Activated naive CD4-positive, alpha-beta T cell treated with anti-CD3 and anti-CD28 coated beads for 36 hours (primary cell): ENCODE measurements at regions of chr6 and their contacts with region 1.

Region 1: DNA sequence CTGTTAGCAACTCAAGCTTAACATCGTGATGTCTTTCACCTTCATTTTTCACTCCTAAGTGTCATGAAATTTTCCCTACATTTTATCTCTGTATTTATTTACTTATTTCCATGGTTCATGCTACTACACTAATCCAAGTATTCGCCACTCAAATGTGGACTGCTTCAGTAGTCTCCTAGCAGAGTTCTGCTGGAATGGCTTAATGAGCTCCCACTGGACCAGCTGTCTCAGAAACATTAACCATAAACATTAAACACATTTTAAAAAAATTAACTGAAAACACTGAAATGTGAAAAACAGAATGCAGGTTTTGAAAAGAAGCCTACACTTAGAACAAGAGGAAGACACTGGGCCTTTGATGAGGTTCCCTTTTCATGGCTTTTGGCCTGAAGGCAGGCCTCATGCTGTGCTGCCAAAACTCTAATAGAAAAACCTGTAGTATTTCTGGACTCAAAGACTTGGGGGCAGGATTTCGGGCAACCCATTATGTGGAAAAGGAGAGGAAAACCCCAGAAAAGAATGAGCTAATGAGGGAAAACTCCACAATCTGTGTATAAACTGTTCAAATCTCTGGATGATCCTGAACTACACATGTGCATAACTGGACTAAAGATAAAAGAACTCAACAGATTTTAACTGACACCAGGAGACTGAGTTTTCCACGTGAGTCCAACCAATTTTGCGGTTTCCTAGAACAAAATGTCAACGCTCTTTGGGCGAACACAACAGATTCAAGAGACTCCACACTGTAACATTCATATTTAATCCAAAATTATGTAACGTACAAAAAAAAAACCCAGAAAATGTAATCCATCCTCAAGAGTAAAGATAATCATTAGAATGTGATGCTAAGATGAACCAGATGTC is 33.0 kb downstream of the SAMD3 start:
- DNase-seq: no peak
- H3K4me3 Mint-ChIP-seq: no peak overlapping the region
- H3K27ac Mint-ChIP-seq: no peak overlapping the region
- H3K4me1 Mint-ChIP-seq: peaks cover 67% of the 10 kb centered on the region
- H3K27me3 Mint-ChIP-seq: no peaks in the 10 kb centered on the region

Region 2: DNA sequence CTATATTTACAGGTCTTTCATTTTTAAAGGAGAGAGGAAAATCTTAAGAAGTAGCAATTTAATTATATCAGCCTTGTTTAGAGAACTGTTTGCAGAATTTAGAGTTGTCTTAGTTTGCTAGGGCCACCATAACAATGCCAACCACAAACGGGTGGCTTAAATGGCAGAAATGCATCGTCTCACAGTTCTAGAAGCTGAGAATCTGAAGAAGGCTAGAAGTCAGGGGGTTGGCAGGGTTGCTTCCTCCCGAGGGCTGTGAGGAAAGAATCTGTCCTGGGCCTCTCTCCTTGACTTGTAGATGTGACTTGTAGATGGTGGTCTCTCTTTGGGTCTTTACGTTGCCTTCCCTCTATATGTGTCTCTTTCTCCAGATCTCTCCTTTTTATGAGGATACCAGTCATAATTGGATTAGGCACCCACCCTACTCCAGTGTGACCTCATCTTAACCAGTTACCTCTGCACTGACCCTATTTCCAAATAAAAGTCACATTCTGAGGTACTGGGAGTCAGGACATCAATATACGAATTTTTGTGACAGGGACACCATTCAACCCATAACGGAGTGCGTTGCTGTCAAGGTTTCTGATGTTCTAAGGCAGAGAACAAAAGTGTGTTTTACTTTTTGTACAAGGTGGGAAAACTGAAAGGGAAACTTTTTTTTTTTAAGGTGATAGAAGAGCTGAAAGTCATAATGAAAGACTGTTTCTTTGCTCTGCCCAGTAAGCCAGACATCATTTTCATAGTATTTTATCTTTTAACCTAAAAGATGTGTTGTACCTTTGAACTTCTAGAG is 51.5 kb before region 1 on chr6:
- CTCF ChIA-PET with region 1: no interaction called
- intact Hi-C with region 1: loop called (anchors 1 kb)
- DNase-seq: peak; percentile 27
- H3K4me3 Mint-ChIP-seq: peak overlapping the region; percentile 55
- H3K27ac Mint-ChIP-seq: peak overlapping the region; percentile 84
- H3K4me1 Mint-ChIP-seq: peaks cover 57% of the 10 kb centered on the region
- H3K27me3 Mint-ChIP-seq: no peaks in the 10 kb centered on the region

Region 3: DNA sequence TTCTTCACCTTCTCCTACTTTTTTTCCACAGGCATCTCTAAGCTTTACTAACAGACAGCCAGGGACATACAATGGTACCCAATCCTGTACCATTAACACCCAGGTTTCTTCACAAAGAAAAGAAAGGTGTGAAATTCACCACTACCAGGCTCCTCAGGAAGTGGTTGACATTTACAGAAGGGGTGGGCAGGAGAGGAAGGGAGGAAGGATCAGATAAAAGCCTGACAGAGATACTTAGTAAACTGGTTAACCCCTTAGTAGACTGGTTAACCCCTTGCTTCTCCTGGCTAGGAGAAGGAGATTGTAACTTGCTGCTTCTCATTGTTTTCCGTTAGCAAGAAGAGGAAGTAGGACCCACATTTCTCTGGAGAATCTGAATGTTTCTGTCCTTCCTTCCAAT is 25.8 kb after region 1 on chr6:
- CTCF ChIA-PET with region 1: interaction called, 3 read pairs
- intact Hi-C with region 1: loop called (anchors 1 kb)
- DNase-seq: peak; percentile 49
- H3K4me3 Mint-ChIP-seq: peak overlapping the region; percentile 60
- H3K27ac Mint-ChIP-seq: peak overlapping the region; percentile 37
- H3K4me1 Mint-ChIP-seq: peaks cover 50% of the 10 kb centered on the region
- H3K27me3 Mint-ChIP-seq: no peaks in the 10 kb centered on the region

Region 4: DNA sequence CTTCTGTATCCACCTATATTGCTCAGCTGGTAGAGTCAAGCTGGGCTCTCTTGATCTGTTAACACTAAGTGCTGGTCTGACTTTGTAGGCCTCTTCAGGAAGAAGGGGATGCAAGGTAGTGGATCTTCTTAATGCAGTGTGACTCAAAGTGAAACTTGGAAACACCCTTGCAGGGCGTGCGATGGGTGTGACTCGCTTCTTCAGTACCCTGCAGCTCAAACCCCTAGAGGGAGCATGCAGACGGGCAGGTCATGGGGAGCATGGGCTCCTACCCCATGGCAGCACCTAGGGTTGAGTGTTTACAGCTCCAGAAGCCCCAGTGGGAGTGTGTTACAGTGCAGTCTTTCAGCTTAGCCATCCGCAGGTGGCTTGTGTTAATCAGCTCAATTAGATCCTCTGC is 33.7 kb after region 1 on chr6:
- CTCF ChIA-PET with region 1: interaction called, 5 read pairs
- intact Hi-C with region 1: loop called (anchors 2 kb)
- DNase-seq: peak; percentile 82
- H3K4me3 Mint-ChIP-seq: no peak overlapping the region
- H3K27ac Mint-ChIP-seq: no peak overlapping the region
- H3K4me1 Mint-ChIP-seq: peaks cover 22% of the 10 kb centered on the region
- H3K27me3 Mint-ChIP-seq: no peaks in the 10 kb centered on the region